Activated CD4-positive, alpha-beta T cell treated with anti-CD3 and anti-CD28 coated beads, Interleukin-2, amount 10 ng/mL, durations not matched to agents 24 days and 14 days (primary cell): ENCODE measurements at regions of chr3 and their contacts with region 1.

Region 1: GRCh38 chr3:98039322-98040024 is 4.4 kb upstream of the GABRR3 start:
- DNase-seq: peak; percentile 94
- H3K4me3 Mint-ChIP-seq: peak overlapping the region; percentile 88
- H3K27ac Mint-ChIP-seq: peak overlapping the region; percentile 93
- H3K4me1 Mint-ChIP-seq: peaks cover 18% of the 10 kb centered on the region
- H3K27me3 Mint-ChIP-seq: peaks cover 31% of the 10 kb centered on the region

Region 2: GRCh38 chr3:97821810-97822775 is 217.4 kb before region 1 on chr3 and contains the start of gene CRYBG3:
- intact Hi-C with region 1: loop called (anchors 1 kb)
- DNase-seq: peak; percentile 97
- H3K4me3 Mint-ChIP-seq: peak within 1 kb of the TSS; percentile 99
- H3K27ac Mint-ChIP-seq: peak within 1 kb of the TSS; percentile 95
- H3K4me1 Mint-ChIP-seq: peaks cover 32% of the 10 kb centered on the region
- H3K27me3 Mint-ChIP-seq: peaks cover 33% of the 10 kb centered on the region
- total RNA-seq, gene CRYBG3: 8.1 and 8.3 TPM in 2 replicates

Region 3: GRCh38 chr3:97971677-97972567 is 67.6 kb before region 1 on chr3 and contains the start of gene RIOX2:
- intact Hi-C with region 1: loop called (anchors 2 kb)
- DNase-seq: peak; percentile 94
- H3K4me3 Mint-ChIP-seq: peak within 1 kb of the TSS; percentile 94
- H3K27ac Mint-ChIP-seq: peak within 1 kb of the TSS; percentile 99
- H3K4me1 Mint-ChIP-seq: peaks cover 76% of the 10 kb centered on the region
- H3K27me3 Mint-ChIP-seq: no peaks in the 10 kb centered on the region
- total RNA-seq, gene RIOX2: 84.1 and 87.7 TPM in 2 replicates

Region 4: DNA sequence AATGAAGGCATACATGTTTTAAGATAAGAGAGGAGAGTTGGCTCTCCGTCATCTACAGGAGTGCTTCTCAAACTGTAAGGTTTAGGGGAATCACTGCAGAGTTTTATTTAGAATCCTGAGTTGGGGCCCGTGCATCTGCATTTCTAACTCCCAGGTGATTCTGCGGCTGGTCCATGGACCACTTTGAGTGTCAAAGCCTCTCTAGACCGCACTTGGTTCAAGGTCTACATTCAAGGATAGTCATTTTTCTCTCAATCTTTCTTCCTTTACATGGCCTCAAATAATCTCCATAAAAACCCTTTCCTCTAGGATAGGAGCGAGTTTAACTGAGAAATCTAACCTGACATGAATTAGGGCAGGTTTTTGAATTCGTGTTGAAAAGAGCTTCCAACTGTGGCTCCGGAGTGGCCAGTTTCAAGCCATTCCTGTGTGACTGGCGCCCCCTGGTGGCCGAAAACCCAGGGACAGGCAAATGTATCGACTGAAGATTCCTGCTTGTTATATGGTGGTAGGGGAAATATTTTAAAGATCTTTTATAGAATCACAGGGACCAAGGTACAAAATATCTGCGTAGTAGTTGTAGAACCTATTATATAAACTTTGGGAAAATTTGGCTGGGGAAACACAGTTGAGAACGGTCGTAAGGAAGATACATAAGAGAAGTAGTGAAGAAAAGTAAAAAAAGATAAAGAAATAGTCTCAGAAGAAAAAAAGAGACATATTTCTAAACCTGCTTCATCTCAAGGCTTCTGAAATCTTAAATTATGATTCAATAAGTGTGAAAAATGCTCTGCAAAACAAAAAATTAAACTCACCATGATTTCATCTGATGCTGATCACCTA is 16.3 kb before region 1 on chr3:
- intact Hi-C with region 1: no loop called
- DNase-seq: peak; percentile 97
- H3K4me3 Mint-ChIP-seq: peak overlapping the region; percentile 13
- H3K27ac Mint-ChIP-seq: peak overlapping the region; percentile 25
- H3K4me1 Mint-ChIP-seq: peaks cover 16% of the 10 kb centered on the region
- H3K27me3 Mint-ChIP-seq: no peaks in the 10 kb centered on the region

Region 5: GRCh38 chr3:98188545-98188944 is 149.1 kb after region 1 on chr3:
- intact Hi-C with region 1: loop called (anchors 5 kb)
- DNase-seq: peak; percentile 64
- H3K4me3 Mint-ChIP-seq: no peak overlapping the region
- H3K27ac Mint-ChIP-seq: no peak overlapping the region
- H3K4me1 Mint-ChIP-seq: peaks cover 3% of the 10 kb centered on the region
- H3K27me3 Mint-ChIP-seq: peaks cover 17% of the 10 kb centered on the region

Region 6: DNA sequence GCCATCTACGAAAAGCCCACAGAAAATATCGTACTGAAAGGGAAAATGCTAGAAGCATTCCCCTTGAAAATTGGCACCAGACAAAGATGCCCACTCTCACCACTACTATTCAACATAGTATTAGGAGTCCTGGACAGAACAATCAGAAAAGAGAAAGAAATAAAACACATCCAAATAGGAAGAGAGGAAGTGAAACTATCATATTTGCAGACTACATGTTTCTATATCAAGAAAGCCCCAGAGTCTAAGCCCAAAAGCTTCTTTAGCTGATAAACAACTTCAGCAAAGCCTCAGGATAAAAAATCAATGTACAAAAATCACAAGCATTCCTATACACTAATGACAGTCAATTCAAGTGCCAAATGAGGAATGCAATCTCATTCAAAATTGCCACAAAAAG is 366.6 kb after region 1 on chr3:
- intact Hi-C with region 1: no loop called
- DNase-seq: no peak
- H3K4me3 Mint-ChIP-seq: no peak overlapping the region
- H3K27ac Mint-ChIP-seq: no peak overlapping the region
- H3K4me1 Mint-ChIP-seq: peaks cover 2% of the 10 kb centered on the region
- H3K27me3 Mint-ChIP-seq: peaks cover 6% of the 10 kb centered on the region

Region 7: DNA sequence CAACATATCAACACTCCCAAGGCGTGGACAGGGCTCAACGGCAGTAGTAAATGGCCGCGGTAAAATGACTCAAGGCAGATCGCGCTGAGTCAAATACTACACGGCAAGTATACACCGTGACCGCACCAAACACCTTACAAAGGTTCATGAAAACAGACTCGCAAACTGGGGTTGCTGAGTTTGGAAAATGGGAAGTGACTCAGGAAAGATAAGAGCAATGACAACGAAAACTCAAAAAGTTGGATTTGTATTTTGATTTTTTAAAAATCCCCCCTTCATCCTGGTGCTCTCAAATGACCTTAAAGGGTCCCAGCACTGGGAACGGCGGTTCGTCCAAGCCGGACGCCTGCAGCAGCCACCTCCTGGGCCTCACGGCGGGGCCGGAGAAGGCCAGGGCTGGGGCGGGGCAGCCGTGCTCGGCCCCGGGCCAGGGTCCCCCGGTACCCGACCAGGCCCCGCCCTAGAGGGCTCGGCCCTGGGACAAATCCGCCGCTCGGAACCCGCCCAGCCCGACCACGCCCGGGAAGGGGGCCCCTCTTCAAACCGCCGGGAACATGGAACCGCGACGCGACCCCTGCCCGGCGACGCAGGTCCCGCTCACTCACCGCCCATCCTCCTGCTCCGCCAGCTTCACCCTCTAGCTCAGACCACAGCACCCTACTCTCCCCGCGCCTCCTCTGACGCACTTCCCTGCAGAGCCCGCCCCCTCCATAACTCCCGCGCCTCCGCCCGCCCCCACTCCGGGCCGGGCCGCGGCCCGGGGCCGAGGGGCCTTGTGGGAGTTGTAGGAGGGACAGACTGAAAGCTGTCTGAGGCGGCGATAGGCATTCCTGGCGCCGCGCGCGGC is 483.0 kb after region 1 on chr3 and contains the start of gene CLDND1:
- intact Hi-C with region 1: loop called (anchors 1 kb)
- DNase-seq: peak; percentile 98
- H3K4me3 Mint-ChIP-seq: peak within 1 kb of the TSS; percentile 88
- H3K27ac Mint-ChIP-seq: peak within 1 kb of the TSS; percentile 93
- H3K4me1 Mint-ChIP-seq: peaks cover 57% of the 10 kb centered on the region
- H3K27me3 Mint-ChIP-seq: no peaks in the 10 kb centered on the region
- total RNA-seq, gene CLDND1: 279 and 288 TPM in 2 replicates

Region 8: GRCh38 chr3:98593046-98593936 is 553.8 kb after region 1 on chr3 and contains the start of gene CPOX:
- intact Hi-C with region 1: loop called (anchors 2 kb)
- DNase-seq: peak; percentile 97
- H3K4me3 Mint-ChIP-seq: peak within 1 kb of the TSS; percentile 90
- H3K27ac Mint-ChIP-seq: peak within 1 kb of the TSS; percentile 91
- H3K4me1 Mint-ChIP-seq: peaks cover 48% of the 10 kb centered on the region
- H3K27me3 Mint-ChIP-seq: no peaks in the 10 kb centered on the region
- total RNA-seq, gene CPOX: 46.4 and 46.6 TPM in 2 replicates

Region 9: DNA sequence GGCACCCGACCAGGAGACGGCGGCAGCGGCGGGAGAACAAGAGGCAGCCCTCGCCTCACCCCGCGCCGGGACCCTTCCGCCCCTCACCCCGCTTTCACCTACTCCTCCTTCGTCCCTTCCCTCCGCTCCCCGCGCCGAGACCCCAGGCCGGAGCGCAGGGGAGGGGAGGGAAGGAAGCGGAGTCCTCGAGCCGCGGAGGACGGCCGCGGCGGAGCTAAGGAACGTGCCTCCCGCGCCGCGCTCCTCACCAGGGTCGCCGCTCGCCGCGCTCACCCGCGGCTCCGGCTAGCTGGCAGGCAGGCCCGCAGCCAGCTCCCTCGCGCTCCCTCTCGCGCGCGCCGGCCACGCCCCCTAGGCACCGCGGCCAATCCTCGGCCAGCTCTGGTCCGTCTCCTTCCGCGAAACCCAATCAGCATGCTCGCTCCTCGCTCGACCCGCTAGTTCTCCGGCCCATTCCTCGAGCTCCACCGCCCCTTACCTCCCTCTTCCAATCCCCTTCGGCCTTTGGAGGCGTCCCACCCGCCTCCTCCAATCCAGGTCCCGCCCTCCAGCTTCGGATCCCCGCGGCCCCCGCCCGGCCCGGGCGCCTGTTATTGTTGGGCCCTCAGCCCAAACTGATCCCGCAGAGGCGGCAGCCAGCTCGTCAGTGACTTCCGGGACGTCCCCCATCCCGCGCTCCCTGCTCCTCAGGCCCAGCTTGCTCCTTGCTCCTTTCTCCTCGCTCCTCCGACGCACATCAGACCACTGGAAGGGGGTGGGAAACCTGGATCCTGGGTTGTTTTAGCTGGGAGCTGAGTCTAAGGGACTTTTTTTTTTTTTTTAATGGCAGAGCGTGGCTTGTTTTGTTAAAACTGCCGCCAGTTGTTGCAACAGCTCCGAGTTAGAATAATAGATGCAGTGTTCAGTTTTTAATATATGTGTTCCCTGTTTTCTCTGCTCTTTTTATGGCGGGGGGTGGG is 862.2 kb after region 1 on chr3 and contains the start of gene DCBLD2:
- intact Hi-C with region 1: loop called (anchors 5 kb)
- DNase-seq: peak; percentile 99
- H3K4me3 Mint-ChIP-seq: peak within 1 kb of the TSS; percentile 89
- H3K27ac Mint-ChIP-seq: peak within 1 kb of the TSS; percentile 77
- H3K4me1 Mint-ChIP-seq: peaks cover 14% of the 10 kb centered on the region
- H3K27me3 Mint-ChIP-seq: peaks cover 29% of the 10 kb centered on the region
- total RNA-seq, gene DCBLD2: 2.7 and 3.8 TPM in 2 replicates